ENCODE measurements at regions of chr11 and their contacts with region 1.

Region 1: DNA sequence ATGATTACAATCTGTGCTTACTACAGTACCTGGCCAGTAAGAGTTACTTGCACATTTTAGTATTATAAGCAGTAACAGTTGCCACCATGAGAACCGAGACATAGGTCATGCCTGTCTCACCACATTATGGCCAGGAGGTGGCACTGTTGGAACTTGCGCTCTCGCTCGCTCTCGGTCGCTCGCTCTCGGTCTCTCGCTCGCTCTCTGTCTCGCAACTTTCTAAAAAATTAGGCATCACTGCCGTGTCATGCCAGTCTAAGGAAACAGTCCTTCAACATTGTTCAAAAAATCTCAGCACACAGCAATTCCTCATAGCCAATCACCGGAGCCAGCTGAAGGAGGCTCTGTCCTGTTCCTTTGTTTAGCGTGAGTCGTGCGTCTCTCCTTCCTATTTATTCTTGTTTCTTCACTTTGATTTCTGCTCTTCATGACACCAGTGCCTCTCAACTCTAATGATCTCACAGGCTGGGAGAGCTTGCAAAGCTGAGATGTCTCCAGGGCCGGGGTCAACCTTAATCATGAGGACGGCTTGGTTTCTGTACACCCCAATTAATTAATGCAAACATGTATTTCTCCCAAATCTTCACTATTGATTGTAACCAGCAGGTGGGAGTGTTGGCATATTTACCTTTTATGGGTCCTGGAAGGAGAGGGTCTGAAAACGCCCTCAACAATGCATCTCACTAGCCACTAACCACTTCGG is 6.3 kb upstream of the ADAMTS8 start:
- DNase-seq: peak; percentile 88

Region 2: DNA sequence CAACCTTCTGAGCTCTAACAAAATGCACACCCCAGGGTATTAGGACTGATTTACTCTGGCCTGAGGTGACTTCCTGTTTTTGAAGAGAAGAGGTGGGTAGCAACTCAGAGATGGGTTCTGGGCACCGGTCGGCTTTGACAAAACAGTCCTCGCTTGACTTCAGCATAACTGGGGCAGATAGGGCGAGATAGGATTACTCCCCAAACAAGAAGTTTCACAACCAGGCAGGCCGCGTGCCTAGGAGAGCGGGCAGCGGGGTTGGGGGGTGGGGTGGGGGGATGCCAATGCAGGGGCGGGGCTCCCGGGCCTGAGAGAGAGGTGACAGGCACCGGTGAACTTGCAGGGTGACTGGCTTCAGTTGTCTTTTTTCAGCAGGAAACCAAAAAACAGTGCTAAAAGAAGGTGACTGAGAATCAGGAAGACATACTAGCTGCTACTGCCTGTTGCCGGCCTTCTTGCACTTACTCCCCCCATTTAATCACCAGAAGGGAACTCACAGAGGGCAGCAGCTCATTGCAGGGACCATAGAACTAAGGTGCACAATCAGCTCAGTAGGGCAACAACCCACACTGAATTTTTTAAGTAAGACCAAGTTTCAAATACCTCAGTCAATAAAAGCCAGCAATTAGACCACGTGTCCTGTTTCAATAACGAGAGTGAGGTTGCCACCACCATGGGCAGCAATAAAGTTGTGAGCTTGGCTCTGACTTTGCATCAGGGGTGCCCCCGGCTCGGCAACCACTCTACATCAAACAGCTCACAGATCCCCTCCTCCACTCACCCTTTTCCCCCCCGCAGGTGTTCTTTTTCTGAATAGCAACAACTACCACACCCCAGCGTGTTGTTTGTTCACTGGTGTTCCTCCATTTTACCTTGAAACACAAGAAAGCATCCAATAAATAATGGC is 1810.2 kb before region 1 on chr11:
- intact Hi-C with region 1: loop called in 1 of 2 experiments (anchors 5 kb)
- DNase-seq: no peak

Region 3: DNA sequence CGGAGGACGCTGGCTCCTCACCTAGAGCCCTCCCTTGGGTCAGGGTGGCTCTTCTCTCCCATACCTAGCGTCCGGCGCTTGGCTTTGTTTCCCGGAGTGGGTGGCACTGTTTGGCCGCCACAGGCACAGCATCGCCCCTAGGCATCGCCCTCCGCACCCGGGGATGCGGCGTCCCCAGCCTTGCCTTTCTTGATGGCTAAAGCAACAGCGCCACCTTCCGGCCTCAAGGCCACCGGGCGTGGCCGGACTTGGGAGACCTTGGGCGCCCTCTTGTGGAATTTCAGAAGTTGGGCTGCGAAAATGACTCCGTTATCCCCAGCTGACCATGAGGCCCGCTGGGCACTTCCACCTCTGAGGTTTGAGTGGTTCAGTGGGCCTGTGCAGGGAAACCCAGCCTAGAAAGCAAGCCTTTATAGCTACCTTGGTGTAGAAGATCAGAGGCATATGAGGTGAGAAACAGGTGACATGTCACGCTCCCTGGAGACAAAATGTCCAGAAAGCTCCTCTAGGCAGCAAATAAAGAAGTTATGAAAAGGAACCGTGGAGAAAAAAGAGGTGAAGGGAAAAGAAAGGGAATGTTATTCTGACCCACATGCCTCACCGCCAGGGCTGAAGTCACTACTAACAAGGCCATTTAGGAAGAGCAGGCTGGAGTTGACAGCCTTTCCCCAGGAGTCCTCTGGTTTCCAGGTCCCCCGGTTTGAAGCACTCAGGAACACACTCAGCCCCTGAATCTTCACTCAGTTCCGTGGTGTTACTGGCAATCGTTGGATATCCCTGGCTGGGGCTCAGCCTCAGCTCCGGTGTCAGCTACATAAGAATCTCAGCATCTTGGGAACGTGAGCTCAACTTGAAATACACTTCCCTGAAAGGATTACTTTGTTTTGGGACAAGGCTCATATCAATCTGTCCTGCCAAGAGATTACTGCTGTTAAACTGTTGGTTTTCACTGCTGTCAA is 427.5 kb after region 1 on chr11:
- intact Hi-C with region 1: loop called (anchors 2 kb)
- DNase-seq: peak; percentile 97